ENCODE measurements at regions of chr22 and their contacts with region 1.

Region 1: DNA sequence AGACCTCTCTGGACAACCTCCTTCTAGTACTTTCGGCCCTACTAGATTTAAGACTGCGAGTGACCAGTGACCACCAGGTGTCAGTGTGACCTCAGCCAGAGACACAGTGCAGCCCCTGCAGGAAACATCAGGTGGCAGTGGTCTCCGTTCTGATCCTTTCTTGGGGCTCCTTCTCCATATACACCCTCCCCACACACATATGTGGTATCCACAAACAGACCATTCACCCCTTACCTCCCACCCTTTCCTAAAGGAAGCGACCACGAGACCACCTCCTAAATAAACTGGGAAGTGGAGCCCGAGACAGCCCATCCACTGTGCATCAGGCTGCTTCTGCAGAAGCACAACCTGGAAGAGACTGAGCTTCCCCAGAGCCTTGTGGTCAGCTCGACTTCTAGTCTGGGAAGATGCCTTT is 38.5 kb upstream of the CYP2D6 start:
- DNase-seq: peak; percentile 70
- ATAC-seq: peak; percentile 85
- H3K4me3 ChIP-seq: no peak overlapping the region
- H3K27ac ChIP-seq: no peak overlapping the region
- H3K4me1 ChIP-seq: peaks cover 8% of the 10 kb centered on the region
- H3K27me3 ChIP-seq: no peaks in the 10 kb centered on the region
- CTCF ChIP-seq: peak; percentile 100
- POLR2A ChIP-seq: peak; percentile 59
- RAD21 ChIP-seq: peak; percentile 99

Region 2: GRCh38 chr22:42217019-42217751 is 48.1 kb after region 1 on chr22:
- CTCF ChIA-PET with region 1: no interaction called
- POLR2A ChIA-PET with region 1: no interaction called
- dilution Hi-C with region 1: no loop called
- in situ Hi-C with region 1: no loop called
- intact Hi-C with region 1: no loop called
- DNase-seq: peak; percentile 55
- ATAC-seq: peak; percentile 48
- H3K4me3 ChIP-seq: no peak overlapping the region
- H3K27ac ChIP-seq: no peak overlapping the region
- H3K4me1 ChIP-seq: peaks cover 9% of the 10 kb centered on the region
- H3K27me3 ChIP-seq: no peaks in the 10 kb centered on the region
- CTCF ChIP-seq: no peak
- POLR2A ChIP-seq: no peak
- RAD21 ChIP-seq: no peak

Region 3: GRCh38 chr22:42313804-42314581 is 144.9 kb after region 1 on chr22:
- CTCF ChIA-PET with region 1: no interaction called
- POLR2A ChIA-PET with region 1: no interaction called
- dilution Hi-C with region 1: no loop called
- in situ Hi-C with region 1: no loop called
- intact Hi-C with region 1: loop called (anchors 1 kb)
- DNase-seq: peak; percentile 54
- ATAC-seq: peak; percentile 84
- H3K4me3 ChIP-seq: no peak overlapping the region
- H3K27ac ChIP-seq: no peak overlapping the region
- H3K4me1 ChIP-seq: no peaks in the 10 kb centered on the region
- H3K27me3 ChIP-seq: peaks cover 24% of the 10 kb centered on the region
- CTCF ChIP-seq: peak; percentile 46
- POLR2A ChIP-seq: no peak
- RAD21 ChIP-seq: peak; percentile 58

Region 4: DNA sequence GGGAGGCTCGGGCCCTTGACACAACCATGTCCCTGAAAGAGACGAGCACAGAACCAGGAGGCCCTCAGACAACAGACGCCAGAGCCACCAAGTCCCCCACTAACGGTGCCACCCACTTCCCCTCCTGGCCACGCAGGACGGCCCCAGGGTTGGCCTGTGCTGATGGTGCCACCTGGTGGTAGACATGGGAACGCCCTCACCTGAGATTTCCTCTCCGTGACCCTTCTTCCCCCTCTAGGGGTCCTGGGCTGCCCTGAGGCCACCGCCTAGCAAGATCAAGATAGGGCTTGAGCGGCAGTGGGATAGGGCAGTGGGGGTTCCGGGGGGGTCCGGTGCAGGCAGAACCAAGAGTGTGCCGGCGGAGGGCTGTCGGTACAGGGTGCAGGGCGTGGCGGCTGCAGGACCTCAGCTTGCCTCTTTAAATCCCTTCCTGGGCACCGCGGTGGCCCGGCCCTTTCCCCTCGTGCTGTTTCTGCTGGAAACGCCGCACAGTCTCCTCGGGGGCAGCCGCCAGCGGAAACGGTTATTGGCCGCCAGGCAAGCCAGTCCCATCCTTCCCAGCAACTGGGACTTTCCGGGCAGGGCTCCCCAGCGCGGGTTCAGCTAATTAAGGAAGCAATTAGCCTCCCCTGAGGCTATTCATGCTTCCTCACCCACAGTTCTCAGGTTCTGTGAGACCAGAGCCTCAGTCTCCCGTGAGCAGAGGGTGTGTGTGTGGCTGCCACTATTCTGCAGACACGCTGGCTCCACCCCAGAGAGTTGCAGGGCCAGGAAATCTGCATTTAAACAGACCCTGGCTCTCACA is 268.6 kb after region 1 on chr22:
- CTCF ChIA-PET with region 1: interaction called, 5 read pairs
- POLR2A ChIA-PET with region 1: no interaction called
- dilution Hi-C with region 1: no loop called
- in situ Hi-C with region 1: loop called (anchors 5 kb)
- intact Hi-C with region 1: loop called (anchors 1 kb)
- DNase-seq: peak; percentile 18
- ATAC-seq: peak; percentile 91
- H3K4me3 ChIP-seq: peak overlapping the region; percentile 42
- H3K27ac ChIP-seq: no peak overlapping the region
- H3K4me1 ChIP-seq: peaks cover 3% of the 10 kb centered on the region; the same call in 1 of the 2 replicates
- H3K27me3 ChIP-seq: peaks cover 26% of the 10 kb centered on the region
- CTCF ChIP-seq: peak; percentile 93
- POLR2A ChIP-seq: no peak
- RAD21 ChIP-seq: peak; percentile 96

Region 5: GRCh38 chr22:42444077-42444904 is 275.2 kb after region 1 on chr22:
- CTCF ChIA-PET with region 1: interaction called, 8 read pairs
- POLR2A ChIA-PET with region 1: no interaction called
- dilution Hi-C with region 1: no loop called
- in situ Hi-C with region 1: loop called (anchors 5 kb)
- intact Hi-C with region 1: no loop called
- DNase-seq: peak; percentile 87
- ATAC-seq: peak; percentile 90
- H3K4me3 ChIP-seq: peak overlapping the region; percentile 27
- H3K27ac ChIP-seq: peak overlapping the region; percentile 24
- H3K4me1 ChIP-seq: peaks cover 12% of the 10 kb centered on the region; the same call in 1 of the 2 replicates
- H3K27me3 ChIP-seq: peaks cover 3% of the 10 kb centered on the region; the same call in 1 of the 2 replicates
- CTCF ChIP-seq: peak; percentile 71
- POLR2A ChIP-seq: no peak
- RAD21 ChIP-seq: peak; percentile 62

Region 6: GRCh38 chr22:42553475-42554361 is 384.7 kb after region 1 on chr22 and contains the start of gene SERHL2:
- CTCF ChIA-PET with region 1: no interaction called
- POLR2A ChIA-PET with region 1: interaction called, 3 read pairs
- dilution Hi-C with region 1: no loop called
- in situ Hi-C with region 1: no loop called
- intact Hi-C with region 1: loop called (anchors 5 kb)
- DNase-seq: peak; percentile 55
- ATAC-seq: peak; percentile 98
- H3K4me3 ChIP-seq: peak within 1 kb of the TSS; percentile 72
- H3K27ac ChIP-seq: peak within 1 kb of the TSS; percentile 39; the same call in 1 of the 2 replicates
- H3K4me1 ChIP-seq: peaks cover 2% of the 10 kb centered on the region; the same call in 1 of the 2 replicates
- H3K27me3 ChIP-seq: peaks cover 13% of the 10 kb centered on the region
- CTCF ChIP-seq: no peak
- POLR2A ChIP-seq: no peak
- RAD21 ChIP-seq: no peak
- total RNA-seq, gene SERHL2: 3.9 and 5.0 TPM in 2 replicates

Measured in IMR-90 (cell line).